Naive thymus-derived CD4-positive, alpha-beta T cell (primary cell): ENCODE measurements at regions of chr1 and their contacts with region 1.

Region 1: GRCh38 chr1:40241362-40241761 is 6.4 kb upstream of the TMCO2 start:
- DNase-seq: no peak
- ATAC-seq: peak; percentile 43
- H3K4me3 ChIP-seq: no peak overlapping the region
- H3K4me3 Mint-ChIP-seq: peak overlapping the region in 3 of 10 donors; percentile 2 to 64 (median 8)
- H3K27ac ChIP-seq: no peak overlapping the region
- H3K27ac Mint-ChIP-seq: peak overlapping the region in 6 of 9 donors; percentile 2 to 81 (median 18)
- H3K4me1 ChIP-seq: peaks cover 12 to 14% of the 10 kb centered on the region in 2 donors
- H3K4me1 Mint-ChIP-seq: peaks cover 7 to 75% (median 19%) of the 10 kb centered on the region in 7 donors
- H3K27me3 ChIP-seq: no peaks in the 10 kb centered on the region
- H3K27me3 Mint-ChIP-seq: no peaks in the 10 kb centered on the region

Region 2: GRCh38 chr1:40161125-40161887 is 80.1 kb before region 1 on chr1 and contains the start of gene RLF:
- CTCF ChIA-PET with region 1: no interaction called
- POLR2A ChIA-PET with region 1: interaction called, 5 read pairs
- intact Hi-C with region 1: loop called in 1 of 2 experiments (anchors 5 kb)
- DNase-seq: peak; percentile 91 to 97 (median 95)
- ATAC-seq: peak; percentile 99
- H3K4me3 ChIP-seq: peak within 1 kb of the TSS; percentile 76
- H3K4me3 Mint-ChIP-seq: no peak within 1 kb of the TSS
- H3K27ac ChIP-seq: peak within 1 kb of the TSS; percentile 88
- H3K27ac Mint-ChIP-seq: peak within 1 kb of the TSS in 2 of 9 donors; percentile 99 to 100
- H3K4me1 ChIP-seq: peaks cover 22 to 25% of the 10 kb centered on the region in 2 donors
- H3K4me1 Mint-ChIP-seq: peaks cover 5 to 19% (median 7%) of the 10 kb centered on the region in 7 donors
- H3K27me3 ChIP-seq: no peaks in the 10 kb centered on the region
- H3K27me3 Mint-ChIP-seq: no peaks in the 10 kb centered on the region
- total RNA-seq, gene RLF: 20.9 to 28.6 (median 24.7) TPM